ENCODE measurements at regions of chr1 and their contacts with region 1.

Region 1: GRCh38 chr1:150979092-150980056 is 2.7 kb upstream of the ANXA9 start:
- DNase-seq: peak; percentile 92
- ATAC-seq: peak; percentile 70
- H3K4me3 Mint-ChIP-seq: peak overlapping the region; percentile 30
- H3K27ac Mint-ChIP-seq: peak overlapping the region; percentile 34
- H3K4me1 Mint-ChIP-seq: peaks cover 30% of the 10 kb centered on the region
- H3K27me3 Mint-ChIP-seq: no peaks in the 10 kb centered on the region

Region 2: GRCh38 chr1:150906341-150906740 is 73.0 kb before region 1 on chr1:
- CTCF ChIA-PET with region 1: no interaction called
- DNase-seq: no peak
- ATAC-seq: no peak
- H3K4me3 Mint-ChIP-seq: no peak overlapping the region
- H3K27ac Mint-ChIP-seq: no peak overlapping the region
- H3K4me1 Mint-ChIP-seq: peaks cover 2% of the 10 kb centered on the region
- H3K27me3 Mint-ChIP-seq: no peaks in the 10 kb centered on the region

Region 3: DNA sequence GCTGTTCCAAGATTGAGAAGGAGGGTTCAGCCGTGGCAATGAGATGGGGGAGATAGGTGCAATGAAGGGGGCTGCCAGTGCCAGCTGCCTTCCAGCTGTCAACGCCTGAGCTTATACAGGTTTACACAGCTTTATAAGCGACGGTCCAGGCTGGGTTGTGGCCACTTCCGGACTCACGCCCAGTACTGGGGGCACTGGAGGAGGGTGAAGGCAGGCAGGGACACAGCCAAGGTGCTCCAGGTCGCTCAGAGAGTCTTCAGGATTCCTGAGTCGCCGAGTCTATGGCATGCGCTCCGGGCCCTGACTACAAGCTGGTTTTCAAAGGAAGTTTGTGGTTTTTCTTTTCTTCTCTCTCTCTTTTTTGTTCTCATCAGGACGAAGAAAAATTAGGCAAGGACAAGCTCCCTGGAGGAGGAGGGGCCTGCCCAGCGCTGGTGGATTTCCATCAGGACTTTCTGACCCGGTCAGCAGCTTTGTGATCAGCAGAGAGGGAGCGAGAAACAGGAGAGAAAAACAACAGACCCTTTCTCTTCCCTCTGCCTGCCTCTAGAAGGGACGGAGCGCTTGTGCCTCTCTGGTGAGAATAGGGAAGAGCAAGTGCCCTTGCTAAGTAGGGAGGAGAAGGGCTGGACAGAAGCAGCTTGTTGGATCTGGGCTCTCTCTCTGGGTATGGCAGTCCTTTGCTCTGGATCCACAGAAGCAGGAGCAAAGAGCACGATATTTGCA is 27.1 kb after region 1 on chr1 and contains the start of gene MINDY1:
- CTCF ChIA-PET with region 1: interaction called, 42 read pairs
- DNase-seq: peak; percentile 59
- ATAC-seq: peak; percentile 14
- H3K4me3 Mint-ChIP-seq: peak within 1 kb of the TSS; percentile 99
- H3K27ac Mint-ChIP-seq: peak within 1 kb of the TSS; percentile 94
- H3K4me1 Mint-ChIP-seq: peaks cover 69% of the 10 kb centered on the region
- H3K27me3 Mint-ChIP-seq: no peaks in the 10 kb centered on the region
- total RNA-seq, gene MINDY1: 4.2 to 7.0 TPM

Region 4: DNA sequence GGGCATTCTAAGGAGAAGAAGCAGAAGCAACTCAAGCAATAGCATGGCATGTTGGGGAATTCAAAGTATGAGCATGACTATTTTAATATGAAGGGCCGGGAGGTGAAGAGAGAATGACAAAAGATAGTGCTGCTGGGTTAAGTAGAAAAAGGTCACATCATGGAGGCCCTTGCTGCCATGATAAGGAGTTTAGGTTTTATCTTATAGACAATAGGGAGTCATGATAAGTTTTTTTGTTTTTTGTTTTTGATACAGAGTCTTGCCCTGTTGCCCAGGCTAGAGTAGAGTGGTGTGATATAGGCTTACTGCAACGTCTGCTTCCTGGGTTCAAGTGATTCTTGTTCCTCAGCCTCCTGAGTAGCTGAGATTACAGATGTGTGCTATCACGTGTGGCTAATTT is 60.1 kb after region 1 on chr1:
- CTCF ChIA-PET with region 1: no interaction called
- DNase-seq: no peak
- ATAC-seq: no peak
- H3K4me3 Mint-ChIP-seq: no peak overlapping the region
- H3K27ac Mint-ChIP-seq: no peak overlapping the region
- H3K4me1 Mint-ChIP-seq: peaks cover 9% of the 10 kb centered on the region
- H3K27me3 Mint-ChIP-seq: no peaks in the 10 kb centered on the region

Region 5: DNA sequence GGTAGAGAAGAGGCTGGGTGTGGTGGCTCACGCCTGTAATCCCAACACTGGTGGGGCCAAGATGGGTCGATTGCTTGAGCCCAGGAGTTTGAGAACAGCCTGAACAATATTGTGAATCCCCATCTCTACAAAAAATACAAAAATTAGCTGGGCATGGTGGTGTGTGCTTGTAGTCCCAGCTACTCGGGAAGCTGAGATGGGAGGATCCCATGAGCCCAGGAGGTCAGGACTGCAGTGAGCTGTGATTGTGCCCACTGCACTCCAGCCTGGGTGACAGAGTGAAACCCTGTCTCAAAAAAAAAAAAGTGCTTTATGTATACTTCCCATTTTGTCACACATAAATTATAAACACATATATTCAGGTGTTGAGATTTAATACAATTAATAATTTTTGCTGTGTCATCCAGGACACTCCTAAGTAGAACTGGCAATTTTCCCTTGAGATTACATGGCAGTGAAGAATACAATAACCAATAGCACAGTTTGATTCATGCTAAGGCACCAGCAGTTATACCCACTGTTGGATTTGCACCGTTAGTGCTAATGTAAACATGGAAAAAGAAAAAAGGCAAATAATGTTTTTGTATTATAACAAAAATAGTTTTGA is 106.7 kb after region 1 on chr1:
- CTCF ChIA-PET with region 1: no interaction called
- DNase-seq: no peak
- ATAC-seq: no peak
- H3K4me3 Mint-ChIP-seq: no peak overlapping the region
- H3K27ac Mint-ChIP-seq: no peak overlapping the region
- H3K4me1 Mint-ChIP-seq: peaks cover 2% of the 10 kb centered on the region
- H3K27me3 Mint-ChIP-seq: no peaks in the 10 kb centered on the region

Measured in activated CD8-positive, alpha-beta memory T cell treated with anti-CD3 and anti-CD28 coated beads, Interleukin-2, amount 10 ng/mL, durations not matched to agents 7 days and 5 days (primary cell).